ENCODE measurements at regions of chr6 and their contacts with region 1.

Region 1: DNA sequence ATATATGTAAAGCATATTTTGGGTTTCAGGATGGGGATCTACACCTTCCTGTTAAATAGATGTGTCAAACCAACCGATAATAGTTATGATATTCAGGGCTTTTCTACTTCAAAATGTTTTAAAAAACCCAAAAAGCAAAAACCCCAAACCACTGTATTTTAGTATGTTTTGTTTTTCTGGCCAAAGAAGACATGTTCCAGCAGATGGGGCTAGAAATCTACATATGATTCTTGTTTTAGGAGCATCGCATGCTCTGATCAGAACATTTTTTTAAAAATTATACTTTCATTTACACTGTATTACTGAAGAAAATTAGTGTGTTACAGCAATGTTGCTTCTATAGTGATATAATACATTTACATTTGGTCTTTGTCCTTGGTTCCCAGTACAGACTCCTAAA is 11.0 kb downstream of the RMND1 start:
- DNase-seq: peak; percentile 25
- CTCF ChIP-seq: peak; percentile 56

Region 2: DNA sequence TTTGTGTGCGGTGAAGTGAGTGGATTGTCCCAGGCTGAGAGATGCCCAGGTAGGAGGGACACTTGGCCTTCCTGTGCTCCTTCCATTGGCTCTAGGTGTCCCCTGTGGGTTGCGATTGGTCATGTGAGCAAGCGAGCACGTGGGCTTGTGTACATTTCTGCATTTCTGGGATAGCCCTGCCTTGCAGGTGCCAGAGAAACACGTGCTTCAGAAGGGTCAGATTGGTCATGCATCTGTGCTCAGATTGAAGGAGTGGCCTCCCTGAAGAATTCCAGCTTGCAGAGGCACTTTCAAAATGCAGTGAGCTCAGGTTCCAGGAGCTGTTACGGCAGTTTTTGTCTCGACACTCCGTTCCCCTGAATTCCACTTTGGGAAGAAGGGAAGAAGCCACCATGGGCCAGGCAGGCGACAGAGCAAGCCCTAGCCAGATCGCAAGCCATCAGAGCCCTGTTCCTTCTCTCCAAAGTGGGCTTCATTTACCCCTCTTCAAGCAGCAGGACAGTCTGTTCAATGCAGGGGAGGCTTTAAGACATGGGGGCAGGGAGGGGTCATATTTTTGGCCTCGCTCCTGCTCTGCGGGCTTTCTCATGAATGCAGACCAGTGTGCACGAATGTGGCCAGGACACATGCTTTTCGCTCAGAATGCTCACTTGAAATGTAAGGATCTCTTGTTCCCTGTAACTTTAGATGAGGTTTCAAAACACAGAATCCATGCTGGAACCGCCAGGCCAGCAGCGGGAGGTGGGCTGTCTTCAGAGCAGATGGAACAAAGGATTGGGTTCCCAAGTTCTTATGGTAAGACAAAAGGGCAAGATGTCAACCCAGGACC is 279.8 kb before region 1 on chr6:
- CTCF ChIA-PET with region 1: no interaction called
- POLR2A ChIA-PET with region 1: no interaction called
- DNase-seq: no peak
- CTCF ChIP-seq: no peak

Region 3: GRCh38 chr6:151430886-151431285 is 10.0 kb before region 1 on chr6:
- CTCF ChIA-PET with region 1: interaction called, 41 read pairs
- POLR2A ChIA-PET with region 1: no interaction called
- DNase-seq: no peak
- CTCF ChIP-seq: no peak

Region 4: GRCh38 chr6:151451950-151452749 is 11.2 kb after region 1 on chr6 and contains the start of gene RMND1:
- CTCF ChIA-PET with region 1: interaction called, 30 read pairs
- POLR2A ChIA-PET with region 1: interaction called, 3 read pairs
- DNase-seq: peak; percentile 97
- CTCF ChIP-seq: no peak

Region 5: DNA sequence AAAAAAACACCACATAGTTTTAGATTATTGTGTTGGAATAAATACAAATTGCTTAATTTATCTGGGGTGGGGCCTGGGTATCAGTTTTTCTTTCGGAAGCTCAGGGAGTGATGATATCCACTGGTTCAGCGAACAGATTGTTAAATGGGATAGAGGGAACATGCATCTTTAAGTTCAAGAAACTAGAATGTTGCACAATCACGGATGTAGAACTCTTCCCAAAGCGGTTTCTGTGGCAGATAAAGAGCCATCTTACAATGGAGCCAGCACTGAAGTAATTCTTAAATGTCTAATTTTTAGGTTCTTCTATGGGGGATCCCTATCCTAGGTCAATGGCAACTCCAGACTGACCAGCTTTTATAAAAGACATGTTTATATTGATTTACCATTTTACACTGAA is 20.7 kb after region 1 on chr6:
- CTCF ChIA-PET with region 1: interaction called, 10 read pairs
- POLR2A ChIA-PET with region 1: no interaction called
- DNase-seq: no peak
- CTCF ChIP-seq: no peak

Region 6: GRCh38 chr6:151475653-151476523 is 35.0 kb after region 1 on chr6:
- CTCF ChIA-PET with region 1: interaction called, 18 read pairs
- POLR2A ChIA-PET with region 1: no interaction called
- DNase-seq: peak; percentile 59
- CTCF ChIP-seq: peak; percentile 63

Region 7: DNA sequence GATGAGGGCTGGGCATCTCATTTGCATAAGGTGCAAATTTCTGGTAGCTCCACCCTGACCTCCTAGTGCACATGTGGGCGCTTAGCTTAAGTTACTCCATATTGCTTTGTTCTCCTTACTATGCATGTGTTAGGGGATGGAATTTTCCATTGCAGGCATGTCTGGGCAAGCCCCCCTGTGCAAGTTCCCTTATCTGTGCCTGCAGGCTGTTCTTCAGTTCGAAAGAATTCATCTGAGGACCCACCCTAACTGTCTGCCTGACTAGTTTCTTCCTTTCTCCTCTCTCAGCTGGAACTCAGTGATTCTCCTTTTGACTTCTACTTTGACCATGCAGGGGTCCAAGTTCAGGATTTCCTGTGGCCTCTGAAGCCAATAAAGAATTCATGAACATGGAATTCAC is 83.1 kb after region 1 on chr6:
- CTCF ChIA-PET with region 1: no interaction called
- POLR2A ChIA-PET with region 1: no interaction called
- DNase-seq: no peak
- CTCF ChIP-seq: no peak